WTC11 (cell line): ENCODE measurements at regions of chr20 and their contacts with region 1.

Region 1: DNA sequence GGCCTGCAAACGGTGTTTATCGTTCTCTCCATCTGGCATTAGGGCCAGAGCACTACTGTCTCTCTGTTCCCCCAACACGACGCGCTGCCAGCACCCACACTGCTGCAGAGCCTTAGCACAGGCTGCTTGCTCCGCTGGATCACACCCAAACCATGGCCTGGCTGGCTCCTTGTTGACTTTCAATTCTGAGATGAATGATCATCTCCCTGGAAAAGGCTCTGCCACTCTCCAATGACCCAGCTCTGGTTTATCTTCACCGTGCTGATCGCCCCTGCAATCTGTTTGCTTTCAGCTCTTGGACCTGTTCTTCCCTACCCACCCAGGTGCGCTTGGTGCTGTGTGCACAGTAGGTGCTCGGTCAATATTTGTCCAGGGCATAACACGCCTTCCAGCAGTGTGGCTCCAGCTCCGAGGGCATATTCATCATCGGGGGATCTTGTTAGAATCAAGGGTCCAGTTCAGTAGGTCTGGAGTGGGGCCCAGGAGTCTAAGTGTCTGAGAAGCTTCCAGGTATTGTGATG is 106.1 kb downstream of the TFAP2C start:
- DNase-seq: peak; percentile 24
- ATAC-seq: no peak
- H3K4me3 Mint-ChIP-seq: peak overlapping the region; percentile 51
- H3K27ac Mint-ChIP-seq: peak overlapping the region; percentile 91
- H3K4me1 Mint-ChIP-seq: peaks cover 74% of the 10 kb centered on the region
- H3K27me3 Mint-ChIP-seq: peaks cover 64% of the 10 kb centered on the region
- CTCF ChIP-seq: no peak

Region 2: DNA sequence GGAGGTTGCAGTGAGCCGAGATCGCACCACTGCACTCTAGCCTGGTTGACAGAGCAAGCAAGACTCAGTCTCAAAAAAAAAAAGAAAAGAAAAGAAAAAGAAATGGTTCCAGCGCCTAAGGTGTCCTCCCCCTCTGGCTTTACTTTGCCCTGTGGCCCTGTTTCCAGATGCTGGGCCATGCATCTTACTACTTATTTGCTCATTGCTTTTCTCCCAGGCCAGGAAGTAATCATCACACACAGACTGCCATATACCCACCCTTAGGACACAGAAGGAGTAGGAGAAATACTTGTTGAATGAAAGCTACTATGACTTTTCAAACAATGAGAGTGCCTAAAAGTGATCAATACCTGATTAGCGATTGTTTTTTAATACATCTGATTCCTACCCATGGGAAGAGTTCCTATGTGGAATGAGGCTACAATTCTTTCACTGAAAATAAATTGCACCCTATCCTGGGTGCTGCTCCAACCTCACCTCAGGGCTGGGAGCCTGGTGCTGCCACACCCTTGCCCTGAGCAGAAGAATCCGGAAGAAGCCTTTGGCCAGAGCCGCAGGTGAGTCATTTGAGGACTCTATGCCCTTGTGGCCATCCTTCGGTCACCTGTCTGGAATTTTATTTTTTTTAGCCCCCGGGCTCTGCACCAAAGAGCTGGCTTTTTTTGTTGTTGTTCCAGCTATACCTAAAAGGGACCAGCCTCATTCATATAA is 128.9 kb before region 1 on chr20:
- CTCF ChIA-PET with region 1: no interaction called
- POLR2A ChIA-PET with region 1: no interaction called
- DNase-seq: no peak
- ATAC-seq: no peak
- H3K4me3 Mint-ChIP-seq: no peak overlapping the region
- H3K27ac Mint-ChIP-seq: no peak overlapping the region
- H3K4me1 Mint-ChIP-seq: peaks cover 13% of the 10 kb centered on the region
- H3K27me3 Mint-ChIP-seq: no peaks in the 10 kb centered on the region
- CTCF ChIP-seq: no peak

Region 3: GRCh38 chr20:56750430-56750829 is 15.2 kb after region 1 on chr20:
- CTCF ChIA-PET with region 1: interaction called, 10 read pairs
- POLR2A ChIA-PET with region 1: no interaction called
- DNase-seq: peak; percentile 76
- ATAC-seq: peak; percentile 91
- H3K4me3 Mint-ChIP-seq: no peak overlapping the region
- H3K27ac Mint-ChIP-seq: no peak overlapping the region
- H3K4me1 Mint-ChIP-seq: peaks cover 58% of the 10 kb centered on the region
- H3K27me3 Mint-ChIP-seq: peaks cover 18% of the 10 kb centered on the region
- CTCF ChIP-seq: no peak

Region 4: GRCh38 chr20:56893226-56893912 is 158.1 kb after region 1 on chr20:
- CTCF ChIA-PET with region 1: no interaction called
- POLR2A ChIA-PET with region 1: interaction called, 11 read pairs
- DNase-seq: peak; percentile 54
- ATAC-seq: peak; percentile 91
- H3K4me3 Mint-ChIP-seq: no peak overlapping the region
- H3K27ac Mint-ChIP-seq: peak overlapping the region; percentile 21; the same call in 1 of the 2 replicates
- H3K4me1 Mint-ChIP-seq: peaks cover 48% of the 10 kb centered on the region
- H3K27me3 Mint-ChIP-seq: no peaks in the 10 kb centered on the region
- CTCF ChIP-seq: no peak